IMR-90 (cell line): ENCODE measurements at regions of chr5 and their contacts with region 1.

Region 1: GRCh38 chr5:78908173-78909061 is 76.7 kb downstream of the ARSB start:
- DNase-seq: peak; percentile 91
- ATAC-seq: peak; percentile 40
- H3K4me3 ChIP-seq: peak overlapping the region; percentile 2; the same call in 1 of the 2 replicates
- H3K27ac ChIP-seq: peak overlapping the region; percentile 91
- H3K4me1 ChIP-seq: peaks cover 17% of the 10 kb centered on the region
- H3K27me3 ChIP-seq: no peaks in the 10 kb centered on the region
- CTCF ChIP-seq: no peak
- POLR2A ChIP-seq: no peak
- RAD21 ChIP-seq: no peak

Region 2: DNA sequence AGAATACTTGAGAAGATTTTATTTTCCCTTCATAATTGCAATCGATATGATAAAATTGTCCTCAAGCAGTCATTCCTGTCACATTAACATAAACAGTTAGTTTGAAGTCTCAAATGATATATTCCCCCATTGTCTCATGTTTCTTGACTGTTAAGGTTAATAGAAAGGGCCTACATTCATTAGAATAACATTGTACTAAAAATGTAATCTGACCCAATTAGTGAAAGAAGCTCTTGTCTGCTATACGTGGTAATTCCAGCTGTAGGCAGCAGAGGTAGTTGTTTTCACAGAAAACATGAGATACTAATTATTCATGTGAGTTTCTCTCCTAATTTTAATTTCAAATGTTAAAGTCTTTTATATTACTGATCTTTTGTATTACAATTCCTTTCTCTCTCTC is 588.0 kb before region 1 on chr5:
- CTCF ChIA-PET with region 1: no interaction called
- POLR2A ChIA-PET with region 1: no interaction called
- dilution Hi-C with region 1: no loop called
- in situ Hi-C with region 1: no loop called
- intact Hi-C with region 1: loop called (anchors 5 kb)
- DNase-seq: peak; percentile 69
- ATAC-seq: peak; percentile 91
- H3K4me3 ChIP-seq: no peak overlapping the region
- H3K27ac ChIP-seq: no peak overlapping the region
- H3K4me1 ChIP-seq: no peaks in the 10 kb centered on the region
- H3K27me3 ChIP-seq: no peaks in the 10 kb centered on the region
- CTCF ChIP-seq: peak; percentile 71
- POLR2A ChIP-seq: no peak
- RAD21 ChIP-seq: peak; percentile 79

Region 3: GRCh38 chr5:78509884-78510769 is 398.3 kb before region 1 on chr5:
- CTCF ChIA-PET with region 1: no interaction called
- POLR2A ChIA-PET with region 1: no interaction called
- dilution Hi-C with region 1: no loop called
- in situ Hi-C with region 1: no loop called
- intact Hi-C with region 1: loop called (anchors 5 kb)
- DNase-seq: no peak
- ATAC-seq: peak; percentile 34
- H3K4me3 ChIP-seq: peak overlapping the region; percentile 9
- H3K27ac ChIP-seq: 0 out of 2 replicates have a peak overlapping the region, but pooled peaks have one; percentile 11
- H3K4me1 ChIP-seq: peaks cover 41% of the 10 kb centered on the region
- H3K27me3 ChIP-seq: no peaks in the 10 kb centered on the region
- CTCF ChIP-seq: no peak
- POLR2A ChIP-seq: no peak
- RAD21 ChIP-seq: no peak

Region 4: GRCh38 chr5:78699565-78700241 is 208.7 kb before region 1 on chr5:
- CTCF ChIA-PET with region 1: no interaction called
- POLR2A ChIA-PET with region 1: no interaction called
- dilution Hi-C with region 1: no loop called
- in situ Hi-C with region 1: no loop called
- intact Hi-C with region 1: no loop called
- DNase-seq: peak; percentile 97
- ATAC-seq: peak; percentile 91
- H3K4me3 ChIP-seq: no peak overlapping the region
- H3K27ac ChIP-seq: peak overlapping the region; percentile 52
- H3K4me1 ChIP-seq: peaks cover 10% of the 10 kb centered on the region
- H3K27me3 ChIP-seq: no peaks in the 10 kb centered on the region
- CTCF ChIP-seq: no peak
- POLR2A ChIP-seq: no peak
- RAD21 ChIP-seq: 0 out of 2 replicates have a peak, but pooled peaks have one; percentile 15

Region 5: DNA sequence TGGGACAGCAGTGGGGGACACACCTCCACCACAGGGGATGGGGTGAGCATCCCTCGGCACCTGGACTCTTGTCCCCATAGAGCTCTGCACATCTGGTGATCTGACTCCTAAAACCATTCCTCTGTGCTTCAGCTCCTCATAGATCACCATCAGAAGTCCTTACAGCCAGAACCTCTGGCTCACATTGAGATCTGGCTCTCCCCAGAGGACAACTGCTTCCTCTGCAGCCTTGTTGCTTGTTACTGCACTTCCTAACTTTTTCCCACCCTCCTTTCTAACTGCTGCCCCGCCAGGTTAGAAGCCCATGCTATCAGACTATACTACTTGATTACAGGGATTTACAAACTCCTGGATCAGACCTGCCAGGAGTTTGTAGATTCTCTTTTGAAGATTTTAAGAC is 12.2 kb after region 1 on chr5:
- CTCF ChIA-PET with region 1: interaction called, 10 read pairs
- POLR2A ChIA-PET with region 1: no interaction called
- dilution Hi-C with region 1: no loop called
- in situ Hi-C with region 1: no loop called
- intact Hi-C with region 1: no loop called
- DNase-seq: peak; percentile 71
- ATAC-seq: peak; percentile 94
- H3K4me3 ChIP-seq: no peak overlapping the region
- H3K27ac ChIP-seq: no peak overlapping the region
- H3K4me1 ChIP-seq: no peaks in the 10 kb centered on the region
- H3K27me3 ChIP-seq: no peaks in the 10 kb centered on the region
- CTCF ChIP-seq: peak; percentile 55
- POLR2A ChIP-seq: no peak
- RAD21 ChIP-seq: peak; percentile 59

Region 6: GRCh38 chr5:79030663-79031484 is 122.5 kb after region 1 on chr5:
- CTCF ChIA-PET with region 1: no interaction called
- POLR2A ChIA-PET with region 1: interaction called, 19 read pairs
- dilution Hi-C with region 1: no loop called
- in situ Hi-C with region 1: no loop called
- intact Hi-C with region 1: no loop called
- DNase-seq: no peak
- ATAC-seq: no peak
- H3K4me3 ChIP-seq: no peak overlapping the region
- H3K27ac ChIP-seq: no peak overlapping the region
- H3K4me1 ChIP-seq: no peaks in the 10 kb centered on the region
- H3K27me3 ChIP-seq: peaks cover 8% of the 10 kb centered on the region
- CTCF ChIP-seq: no peak
- POLR2A ChIP-seq: no peak
- RAD21 ChIP-seq: no peak